MCF 10A (cell line): ENCODE measurements at regions of chr12 and their contacts with region 1.

Region 1: DNA sequence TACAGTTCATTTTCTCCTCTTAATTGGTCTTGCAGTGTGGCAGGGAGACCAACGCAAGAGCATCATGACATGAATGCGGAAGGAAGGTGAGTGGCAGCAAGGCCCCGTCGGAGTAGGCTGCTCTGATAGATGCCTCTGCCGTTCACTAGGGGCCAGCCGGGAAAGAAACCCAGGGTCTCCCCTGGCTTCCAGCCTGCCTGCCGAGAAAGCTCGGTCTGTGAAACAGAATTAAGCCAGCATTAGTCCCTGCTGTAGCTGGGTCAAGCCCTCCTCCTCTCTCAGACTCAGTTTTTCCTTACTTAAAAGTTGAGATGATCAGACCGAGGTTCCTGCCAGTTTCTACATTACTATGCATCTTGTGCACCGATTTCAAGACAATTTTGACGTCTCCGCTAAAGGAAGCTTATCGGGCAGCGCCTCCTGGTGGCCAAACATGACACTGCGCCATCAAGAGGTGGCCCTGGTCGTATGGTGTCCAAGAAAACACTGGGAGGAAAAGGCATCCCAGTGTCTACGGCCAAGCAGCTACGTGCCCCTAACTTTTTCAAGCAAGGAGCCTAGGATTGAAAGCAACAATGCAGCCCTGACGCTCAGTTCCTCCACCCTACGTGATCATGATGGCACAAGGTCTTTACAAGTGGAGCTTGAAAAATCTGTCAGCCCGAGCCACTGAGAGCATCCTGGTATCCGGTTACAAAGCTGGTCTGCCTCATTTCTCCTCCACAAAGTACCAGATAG is 131.6 kb downstream of the KSR2 start:
- DNase-seq: peak; percentile 80
- H3K4me3 Mint-ChIP-seq: no peak overlapping the region
- H3K27ac Mint-ChIP-seq: no peak overlapping the region
- H3K4me1 Mint-ChIP-seq: peaks cover 7% of the 10 kb centered on the region
- H3K27me3 Mint-ChIP-seq: peaks cover 33% of the 10 kb centered on the region
- CTCF ChIP-seq: peak; percentile 93

Region 2: DNA sequence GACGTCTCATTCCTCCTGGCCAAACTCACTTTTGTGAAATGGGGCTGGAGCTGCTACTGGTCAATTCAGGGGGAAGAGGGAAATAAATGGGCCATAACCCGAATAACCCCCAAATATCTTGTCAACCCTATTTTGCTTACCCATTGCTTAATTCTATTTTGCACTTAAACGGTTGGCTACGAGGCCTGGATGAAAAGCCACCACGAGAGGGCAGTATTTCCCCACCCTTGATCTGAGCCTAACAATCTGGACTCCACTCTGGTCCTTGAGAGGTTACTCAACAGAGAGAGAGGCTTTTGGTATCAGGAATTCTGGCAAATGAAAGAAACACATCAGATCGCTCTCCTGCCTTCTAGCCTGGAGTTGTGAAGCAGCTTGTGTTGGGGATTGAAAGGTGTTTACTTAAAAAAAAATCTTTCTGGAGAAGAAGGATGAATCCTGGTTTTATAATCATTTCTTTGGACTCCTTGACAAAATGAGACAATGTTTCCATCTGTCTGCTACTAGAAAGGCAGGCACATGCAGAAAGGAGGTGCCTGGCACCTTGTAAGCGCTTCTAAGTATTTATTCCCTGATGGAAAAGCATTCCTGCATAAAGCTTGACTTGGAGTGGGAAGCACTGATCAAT is 624.5 kb before region 1 on chr12:
- CTCF ChIA-PET with region 1: interaction called, 37 read pairs
- POLR2A ChIA-PET with region 1: no interaction called
- intact Hi-C with region 1: loop called (anchors 2 kb)
- DNase-seq: peak; percentile 86
- H3K4me3 Mint-ChIP-seq: no peak overlapping the region
- H3K27ac Mint-ChIP-seq: no peak overlapping the region
- H3K4me1 Mint-ChIP-seq: no peaks in the 10 kb centered on the region
- H3K27me3 Mint-ChIP-seq: peaks cover 70% of the 10 kb centered on the region
- CTCF ChIP-seq: peak; percentile 82

Region 3: GRCh38 chr12:117367011-117367638 is 470.0 kb before region 1 on chr12:
- CTCF ChIA-PET with region 1: interaction called, 262 read pairs
- POLR2A ChIA-PET with region 1: interaction called, 5 read pairs
- intact Hi-C with region 1: loop called (anchors 1 kb)
- DNase-seq: peak; percentile 79
- H3K4me3 Mint-ChIP-seq: no peak overlapping the region
- H3K27ac Mint-ChIP-seq: no peak overlapping the region
- H3K4me1 Mint-ChIP-seq: peaks cover 7% of the 10 kb centered on the region
- H3K27me3 Mint-ChIP-seq: peaks cover 26% of the 10 kb centered on the region
- CTCF ChIP-seq: peak; percentile 81

Region 4: DNA sequence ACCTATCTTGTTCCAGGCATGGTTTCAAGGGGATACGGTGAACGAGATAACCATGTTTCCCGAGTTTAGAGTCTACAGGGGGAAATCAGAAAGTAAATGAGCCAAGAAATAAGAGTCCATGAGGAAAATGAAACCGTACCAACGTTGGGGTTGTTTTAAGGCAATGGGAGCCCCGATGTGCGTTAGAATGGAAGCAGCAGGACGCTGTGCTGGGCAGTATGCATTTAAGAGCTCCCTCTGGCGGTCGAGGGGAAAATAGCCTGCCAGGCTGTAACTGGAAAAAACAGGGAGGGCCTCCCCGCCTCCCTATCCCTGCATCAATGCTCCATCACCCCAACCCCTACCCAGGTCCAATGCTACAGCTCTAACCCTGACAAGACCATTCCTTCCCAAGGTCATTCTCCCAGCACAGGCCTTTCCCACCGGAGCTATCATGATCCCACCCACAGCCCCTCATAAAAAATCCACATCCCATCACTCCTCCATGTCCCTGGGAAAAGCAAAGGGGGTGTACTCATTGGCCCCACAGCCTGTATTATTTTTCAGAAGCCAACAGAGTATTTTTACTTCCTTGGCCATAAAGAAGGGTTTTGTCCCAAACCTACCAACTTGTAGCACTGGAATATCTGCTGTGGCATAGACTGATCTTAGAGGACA is 249.4 kb before region 1 on chr12:
- CTCF ChIA-PET with region 1: interaction called, 67 read pairs
- POLR2A ChIA-PET with region 1: no interaction called
- intact Hi-C with region 1: loop called (anchors 1 kb)
- DNase-seq: peak; percentile 65
- H3K4me3 Mint-ChIP-seq: no peak overlapping the region
- H3K27ac Mint-ChIP-seq: no peak overlapping the region
- H3K4me1 Mint-ChIP-seq: no peaks in the 10 kb centered on the region
- H3K27me3 Mint-ChIP-seq: peaks cover 21% of the 10 kb centered on the region
- CTCF ChIP-seq: peak; percentile 78

Region 5: DNA sequence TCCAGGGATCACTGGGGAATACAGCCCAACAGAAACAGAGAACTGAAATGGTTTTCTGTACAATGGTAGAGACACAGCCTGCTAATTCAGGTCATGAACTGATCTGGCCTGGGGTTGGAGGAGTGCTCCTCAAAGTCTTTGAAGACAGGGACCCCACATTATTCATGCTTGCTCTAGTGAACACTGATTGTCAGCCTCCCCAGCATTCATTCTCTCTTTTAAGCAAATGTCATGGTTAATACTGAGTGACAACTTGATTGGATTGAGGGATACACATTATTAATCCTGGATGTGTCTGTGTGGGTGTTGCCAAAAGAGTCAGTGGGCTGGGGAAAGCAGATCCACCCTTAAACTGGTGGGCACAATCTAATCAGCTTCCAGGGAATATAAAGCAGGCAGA is 187.4 kb before region 1 on chr12:
- CTCF ChIA-PET with region 1: no interaction called
- POLR2A ChIA-PET with region 1: no interaction called
- intact Hi-C with region 1: no loop called
- DNase-seq: no peak
- H3K4me3 Mint-ChIP-seq: no peak overlapping the region
- H3K27ac Mint-ChIP-seq: no peak overlapping the region
- H3K4me1 Mint-ChIP-seq: peaks cover 10% of the 10 kb centered on the region
- H3K27me3 Mint-ChIP-seq: peaks cover 13% of the 10 kb centered on the region
- CTCF ChIP-seq: no peak

Region 6: DNA sequence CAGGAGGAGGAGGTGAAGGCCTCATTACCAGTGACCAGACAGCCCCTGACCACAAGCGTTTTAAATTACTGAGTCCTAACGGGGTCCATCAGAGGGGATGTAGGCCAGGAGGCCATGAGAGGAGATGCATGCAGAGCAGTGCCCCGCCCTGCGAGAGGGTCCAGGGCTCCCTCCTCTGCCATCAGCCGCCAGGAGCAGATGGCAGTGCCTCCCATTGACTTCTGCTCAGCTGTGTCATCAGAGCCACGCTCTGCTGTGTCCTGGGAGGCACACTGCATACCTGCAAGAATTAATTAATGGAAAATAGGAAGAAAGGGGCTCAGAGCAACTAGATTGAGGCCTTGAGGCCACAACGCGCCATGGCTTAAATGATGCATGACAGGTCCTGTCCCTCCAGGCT is 104.4 kb before region 1 on chr12:
- CTCF ChIA-PET with region 1: interaction called, 3 read pairs
- POLR2A ChIA-PET with region 1: no interaction called
- intact Hi-C with region 1: loop called (anchors 10 kb)
- DNase-seq: no peak
- H3K4me3 Mint-ChIP-seq: no peak overlapping the region
- H3K27ac Mint-ChIP-seq: no peak overlapping the region
- H3K4me1 Mint-ChIP-seq: no peaks in the 10 kb centered on the region
- H3K27me3 Mint-ChIP-seq: peaks cover 3% of the 10 kb centered on the region
- CTCF ChIP-seq: no peak

Region 7: GRCh38 chr12:117850048-117850447 is 12.9 kb after region 1 on chr12:
- CTCF ChIA-PET with region 1: interaction called, 115 read pairs
- POLR2A ChIA-PET with region 1: no interaction called
- intact Hi-C with region 1: no loop called
- DNase-seq: peak; percentile 77
- H3K4me3 Mint-ChIP-seq: no peak overlapping the region
- H3K27ac Mint-ChIP-seq: no peak overlapping the region
- H3K4me1 Mint-ChIP-seq: peaks cover 4% of the 10 kb centered on the region
- H3K27me3 Mint-ChIP-seq: peaks cover 44% of the 10 kb centered on the region
- CTCF ChIP-seq: peak; percentile 77